Endothelial cell of umbilical vein (primary cell): ENCODE measurements at regions of chr20 and their contacts with region 1.

Region 1: DNA sequence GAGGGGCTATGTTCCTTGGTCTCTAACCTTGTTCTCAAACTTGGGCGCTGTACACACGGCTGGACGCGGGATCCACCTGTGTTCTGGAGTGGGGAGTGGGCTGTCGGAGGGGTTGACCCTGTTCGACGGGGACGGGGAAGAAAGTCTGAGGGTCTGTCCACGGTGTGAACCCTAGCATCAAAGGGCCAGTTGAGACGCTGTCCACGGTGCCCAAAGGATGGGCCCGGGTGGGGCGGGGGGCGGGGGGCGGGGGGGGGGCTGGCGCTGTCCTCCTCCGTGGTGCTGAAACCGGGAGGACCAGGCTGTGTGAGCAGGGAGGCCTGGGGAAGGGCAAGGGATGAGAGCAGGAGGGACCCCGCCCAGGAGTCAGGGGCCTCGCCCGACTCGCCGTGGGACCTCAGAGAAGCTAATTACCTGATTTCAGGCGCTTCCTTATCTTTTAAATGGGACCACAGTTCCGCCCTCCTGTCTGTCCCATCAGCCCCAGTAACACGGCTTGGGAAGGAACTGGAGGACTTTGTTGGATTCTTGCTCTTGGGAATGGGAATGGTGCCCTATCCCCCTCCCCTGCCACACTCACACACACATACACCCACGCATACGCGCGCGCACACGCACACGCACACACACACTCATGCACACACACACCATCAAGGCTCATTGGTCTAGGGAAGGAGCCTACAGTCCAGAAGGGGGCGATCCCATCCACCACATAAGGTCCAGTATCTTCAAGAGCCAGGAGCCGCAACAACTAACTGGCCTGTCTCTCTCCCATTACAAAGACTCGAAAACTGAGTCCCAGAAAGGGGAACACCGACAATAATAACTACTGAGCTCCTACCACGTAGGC is 1.0 kb upstream of the VSTM2L start:
- DNase-seq: peak; percentile 31
- H3K4me3 ChIP-seq: no peak overlapping the region
- H3K27ac ChIP-seq: no peak overlapping the region
- H3K4me1 ChIP-seq: no peaks in the 10 kb centered on the region
- H3K27me3 ChIP-seq: peaks cover 36 to 38% of the 10 kb centered on the region in 2 experiments
- CTCF ChIP-seq: peak; percentile 36 to 53
- POLR2A ChIP-seq: no peak

Region 2: GRCh38 chr20:37990571-37991151 is 88.8 kb after region 1 on chr20:
- CTCF ChIA-PET with region 1: interaction called, 5 read pairs
- POLR2A ChIA-PET with region 1: no interaction called
- dilution Hi-C with region 1: no loop called
- intact Hi-C with region 1: loop called (anchors 5 kb)
- DNase-seq: peak; percentile 59
- H3K4me3 ChIP-seq: no peak overlapping the region
- H3K27ac ChIP-seq: peak overlapping the region; percentile 68
- H3K4me1 ChIP-seq: peaks cover 24% of the 10 kb centered on the region
- H3K27me3 ChIP-seq: no peaks in the 10 kb centered on the region
- CTCF ChIP-seq: no peak
- POLR2A ChIP-seq: no peak

Region 3: DNA sequence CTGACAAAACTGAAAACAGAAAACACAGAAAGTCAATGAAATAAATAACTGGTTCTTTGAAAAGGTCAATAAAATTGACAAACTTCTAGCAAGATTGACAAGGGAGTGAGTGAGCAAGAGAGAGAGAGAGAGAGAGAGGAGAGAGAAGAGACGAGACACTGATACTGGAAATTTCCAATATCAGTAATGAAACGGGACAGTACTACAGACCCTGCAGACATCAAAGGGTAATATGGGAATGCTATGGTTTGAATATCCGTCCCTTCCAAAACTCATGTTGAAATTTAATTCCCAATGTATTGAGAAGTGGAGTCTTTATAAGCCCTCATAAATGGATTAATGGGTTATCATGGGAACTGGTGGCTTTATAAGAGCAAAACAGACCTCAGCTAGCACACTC is 127.6 kb after region 1 on chr20:
- CTCF ChIA-PET with region 1: no interaction called
- POLR2A ChIA-PET with region 1: no interaction called
- dilution Hi-C with region 1: no loop called
- intact Hi-C with region 1: no loop called
- DNase-seq: no peak
- H3K4me3 ChIP-seq: no peak overlapping the region
- H3K27ac ChIP-seq: no peak overlapping the region
- H3K4me1 ChIP-seq: peaks cover 18% of the 10 kb centered on the region
- H3K27me3 ChIP-seq: no peaks in the 10 kb centered on the region
- CTCF ChIP-seq: no peak
- POLR2A ChIP-seq: no peak

Region 4: DNA sequence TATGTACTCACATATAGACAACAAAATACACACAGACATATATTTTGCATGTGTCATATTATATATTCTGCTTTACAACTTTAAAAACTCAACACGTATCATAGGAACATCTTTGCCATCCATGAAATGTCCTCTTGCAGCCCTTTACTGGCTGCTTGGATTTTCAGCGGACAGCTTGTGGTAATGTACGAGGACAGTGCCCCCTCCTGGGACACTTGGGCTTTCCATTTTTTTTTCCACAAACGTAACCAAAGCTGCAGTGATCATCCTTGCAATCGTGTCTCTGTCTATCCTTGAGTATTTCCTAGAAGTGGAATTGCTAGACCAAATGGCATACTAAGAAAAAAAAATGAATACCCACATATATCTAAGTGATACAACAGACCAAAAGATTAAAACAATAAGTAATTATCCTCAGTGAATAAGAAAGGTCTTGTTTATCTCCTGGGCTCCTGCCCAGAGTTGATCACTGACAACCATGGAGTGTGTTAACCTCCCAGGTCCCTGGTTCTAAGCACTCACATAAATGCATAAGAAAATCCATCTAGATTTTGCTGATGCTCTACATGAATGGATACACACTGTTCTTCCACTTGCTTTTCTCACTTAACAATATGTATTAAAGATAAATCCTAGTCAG is 420.2 kb after region 1 on chr20:
- CTCF ChIA-PET with region 1: no interaction called
- POLR2A ChIA-PET with region 1: no interaction called
- dilution Hi-C with region 1: no loop called
- intact Hi-C with region 1: loop called (anchors 5 kb)
- DNase-seq: peak; percentile 69
- H3K4me3 ChIP-seq: no peak overlapping the region
- H3K27ac ChIP-seq: no peak overlapping the region
- H3K4me1 ChIP-seq: no peaks in the 10 kb centered on the region
- H3K27me3 ChIP-seq: peaks cover 2 to 5% of the 10 kb centered on the region in 2 experiments
- CTCF ChIP-seq: peak; percentile 66 to 69
- POLR2A ChIP-seq: no peak